Right cardiac atrium (tissue), 5 donors: ENCODE measurements at regions of chr6 and their contacts with region 1.

Region 1: DNA sequence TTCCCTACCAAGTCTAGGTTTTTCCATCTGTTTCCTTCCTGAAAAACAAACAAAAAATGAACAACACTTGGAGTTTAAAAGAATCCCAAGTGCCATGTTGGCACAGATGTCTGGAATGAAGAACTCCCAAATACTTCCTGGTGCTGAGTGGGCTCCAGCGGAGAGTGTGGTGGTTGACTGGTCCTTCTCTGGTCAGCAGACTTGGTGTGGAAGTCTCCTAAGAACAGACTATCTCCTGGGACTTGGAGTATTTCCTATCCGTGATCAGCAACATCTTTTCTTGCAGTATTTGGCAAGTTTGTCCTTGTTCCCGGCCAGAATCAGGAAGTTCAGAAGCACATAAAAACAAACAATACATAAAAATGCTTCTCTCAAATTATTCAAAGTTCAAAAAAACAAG is 154.1 kb downstream of the MTFR2 start:
- DNase-seq: peak; percentile 31 to 83 (median 70)
- ATAC-seq: peak; percentile 93 to 95
- H3K4me3 ChIP-seq: no peak overlapping the region
- H3K27ac ChIP-seq: no peak overlapping the region
- H3K4me1 ChIP-seq: peaks cover 6% of the 10 kb centered on the region
- H3K27me3 ChIP-seq: no peaks in the 10 kb centered on the region

Region 2: GRCh38 chr6:136031982-136032381 is 64.0 kb before region 1 on chr6:
- intact Hi-C with region 1: loop called in 1 of 4 experiments (anchors 10 kb)
- DNase-seq: no peak
- ATAC-seq: peak in 1 of 2 donors; percentile 31
- H3K4me3 ChIP-seq: no peak overlapping the region
- H3K27ac ChIP-seq: no peak overlapping the region
- H3K4me1 ChIP-seq: peaks cover 8% of the 10 kb centered on the region
- H3K27me3 ChIP-seq: no peaks in the 10 kb centered on the region